ENCODE measurements at regions of chr22 and their contacts with region 1.

Region 1: DNA sequence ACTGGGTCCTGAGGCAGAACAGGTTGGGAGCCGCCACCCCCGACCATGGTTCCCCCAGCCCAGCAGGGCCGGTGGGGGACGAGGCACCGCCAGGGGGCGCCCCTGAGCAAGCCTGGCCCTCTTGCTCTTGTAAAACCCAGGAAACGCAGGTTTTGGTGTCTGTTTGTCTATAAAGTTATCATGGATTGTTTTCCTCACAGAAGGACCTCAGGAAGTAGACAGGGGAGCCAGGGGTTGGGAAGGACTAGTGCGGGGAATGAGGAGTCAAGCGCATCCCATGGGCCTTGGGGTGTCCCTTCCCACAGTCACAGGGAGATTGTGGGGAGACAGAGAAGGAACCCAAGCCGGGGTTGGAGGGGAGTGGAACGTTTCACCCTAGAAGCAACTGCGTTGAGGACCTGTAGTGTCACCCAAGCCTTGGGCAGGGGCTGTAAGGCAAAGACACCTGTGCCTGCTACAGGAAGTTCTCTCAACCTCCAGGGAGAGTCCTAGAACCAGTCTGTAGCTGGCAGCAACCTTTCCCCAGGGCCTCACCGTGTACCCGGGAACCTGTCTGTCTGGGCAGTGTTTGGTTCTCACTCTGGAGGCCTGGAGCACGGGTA is 26.4 kb downstream of the KCTD17 start:
- DNase-seq: peak; percentile 73
- H3K4me3 ChIP-seq: no peak overlapping the region
- H3K27ac ChIP-seq: no peak overlapping the region
- H3K4me1 ChIP-seq: no peaks in the 10 kb centered on the region
- H3K27me3 ChIP-seq: no peaks in the 10 kb centered on the region
- CTCF ChIP-seq: peak; percentile 98

Region 2: GRCh38 chr22:36816636-36817524 is 261.1 kb before region 1 on chr22 and contains the start of gene PVALB:
- intact Hi-C with region 1: no loop called
- DNase-seq: no peak
- H3K4me3 ChIP-seq: no peak within 1 kb of the TSS
- H3K27ac ChIP-seq: no peak within 1 kb of the TSS
- H3K4me1 ChIP-seq: no peaks in the 10 kb centered on the region
- H3K27me3 ChIP-seq: peaks cover 47% of the 10 kb centered on the region
- CTCF ChIP-seq: no peak
- total RNA-seq, gene PVALB: not detected

Region 3: GRCh38 chr22:36998620-36999340 is 79.2 kb before region 1 on chr22:
- intact Hi-C with region 1: no loop called
- DNase-seq: no peak
- H3K4me3 ChIP-seq: no peak overlapping the region
- H3K27ac ChIP-seq: no peak overlapping the region
- H3K4me1 ChIP-seq: no peaks in the 10 kb centered on the region
- H3K27me3 ChIP-seq: no peaks in the 10 kb centered on the region
- CTCF ChIP-seq: no peak

Region 4: GRCh38 chr22:37199103-37199759 is 121.2 kb after region 1 on chr22:
- intact Hi-C with region 1: loop called (anchors 5 kb)
- DNase-seq: peak; percentile 99
- H3K4me3 ChIP-seq: peak overlapping the region; percentile 43
- H3K27ac ChIP-seq: peak overlapping the region; percentile 82
- H3K4me1 ChIP-seq: peaks cover 24% of the 10 kb centered on the region
- H3K27me3 ChIP-seq: no peaks in the 10 kb centered on the region
- CTCF ChIP-seq: peak; percentile 90

Measured in colonic mucosa (tissue), 4 donors.